HEK293T (cell line): ENCODE measurements at regions of chr1 and their contacts with region 1.

Region 1: DNA sequence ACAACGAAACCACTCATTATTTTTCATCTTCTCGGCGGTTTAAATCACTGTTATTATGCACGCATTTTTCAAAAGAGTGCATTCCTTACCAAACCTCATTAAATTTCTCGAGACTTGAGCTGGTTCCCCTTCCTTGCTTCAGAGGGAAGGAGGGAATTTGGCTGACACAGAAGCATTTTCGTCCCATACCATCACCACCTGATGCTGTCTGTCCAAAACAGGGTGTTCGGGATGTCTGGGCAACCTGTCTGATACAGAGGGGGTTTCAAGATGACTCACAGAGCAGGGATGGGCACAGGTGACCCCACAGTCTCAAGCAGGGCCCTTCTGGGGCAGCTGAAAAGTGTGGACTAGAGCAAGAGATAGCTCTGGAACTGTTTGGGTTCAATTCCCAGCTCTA is 12.3 kb upstream of the RCC2 start:
- DNase-seq: no peak

Region 2: DNA sequence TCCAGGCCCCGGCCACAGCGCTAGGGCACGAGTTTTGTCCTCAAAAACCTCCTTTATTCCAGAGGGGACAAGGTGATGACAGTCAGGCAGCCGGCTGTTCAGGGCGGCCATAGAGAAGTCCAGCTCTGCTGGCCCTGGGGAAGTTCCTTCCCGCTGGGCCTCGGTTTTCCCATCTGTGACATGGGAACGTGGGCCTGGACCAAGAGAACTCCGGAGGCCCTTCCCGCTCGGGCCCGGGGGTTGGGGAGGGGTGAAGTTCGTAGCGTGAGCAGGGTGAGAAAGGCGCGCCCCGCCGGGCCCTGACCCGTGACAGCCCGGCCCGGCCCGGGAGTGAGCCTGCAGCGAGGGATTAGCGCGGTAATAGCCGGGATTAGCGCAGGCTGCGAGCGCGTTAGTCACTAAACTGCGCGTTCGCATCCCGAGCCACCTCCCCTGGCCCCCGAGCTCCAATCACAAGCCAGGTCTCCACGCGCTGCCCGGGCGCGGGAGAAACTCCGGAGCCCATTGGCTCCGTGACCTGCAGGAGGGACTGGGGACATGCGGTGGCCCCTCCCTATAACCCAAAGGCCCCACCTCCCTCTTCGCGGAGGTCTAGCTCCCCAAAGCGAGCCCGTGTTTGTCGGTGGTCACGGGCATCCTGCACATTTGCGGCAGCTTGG is 302.7 kb before region 1 on chr1:
- CTCF ChIA-PET with region 1: no interaction called
- POLR2A ChIA-PET with region 1: no interaction called
- DNase-seq: no peak

Region 3: GRCh38 chr1:17439250-17440073 is 12.3 kb before region 1 on chr1 and contains the start of gene RCC2:
- CTCF ChIA-PET with region 1: interaction called, 3 read pairs
- POLR2A ChIA-PET with region 1: interaction called, 10 read pairs
- DNase-seq: peak; percentile 84

Region 4: GRCh38 chr1:17475729-17476128 is 24.0 kb after region 1 on chr1:
- CTCF ChIA-PET with region 1: no interaction called
- POLR2A ChIA-PET with region 1: no interaction called
- DNase-seq: no peak